ENCODE measurements at regions of chr16 and their contacts with region 1.

Region 1: GRCh38 chr16:73878611-73879010 is 418.0 kb upstream of the PSMD7 start:
- DNase-seq: no peak
- H3K4me3 ChIP-seq: no peak overlapping the region
- H3K27ac ChIP-seq: no peak overlapping the region
- H3K4me1 ChIP-seq: peaks cover 0 to 8% (median 0%) of the 10 kb centered on the region in 3 donors
- H3K27me3 ChIP-seq: peaks cover 0 to 16% (median 0%) of the 10 kb centered on the region in 4 donors
- CTCF ChIP-seq: peak in 4 of 6 experiments; percentile 31 to 56 (median 42)
- POLR2A ChIP-seq: no peak

Region 2: DNA sequence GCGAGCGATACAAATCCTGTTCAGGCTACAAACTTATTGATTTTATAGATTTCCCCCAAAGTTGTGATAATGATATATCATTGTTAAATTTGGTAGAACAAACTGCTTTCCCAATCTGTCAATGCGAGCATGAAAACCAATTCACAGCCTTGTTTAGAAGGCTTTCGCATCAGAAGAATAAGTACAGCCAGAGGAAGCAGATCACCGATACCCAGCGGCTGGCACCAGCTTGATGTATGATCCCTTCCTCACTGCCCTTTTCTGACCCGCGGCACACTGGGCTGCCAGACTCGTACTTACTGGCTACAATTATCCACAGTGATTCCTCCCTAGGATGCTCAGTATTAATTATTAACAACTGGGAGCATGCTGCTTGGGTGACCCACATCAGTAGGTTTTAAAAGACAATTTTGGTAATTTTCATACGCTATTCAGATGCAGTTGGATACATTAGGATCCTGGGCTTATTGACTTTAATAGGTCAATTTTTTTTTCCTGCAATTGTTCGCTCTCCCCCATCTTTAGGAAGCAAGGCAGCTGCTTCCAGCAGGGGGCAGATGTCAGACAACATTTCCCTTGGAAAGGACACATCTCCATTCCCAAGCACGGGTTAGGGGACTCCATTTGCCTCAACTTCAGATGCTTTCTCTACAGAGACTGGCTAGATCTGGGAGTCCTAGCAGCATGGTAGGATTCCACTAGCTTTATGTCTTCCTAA is 164.7 kb before region 1 on chr16:
- intact Hi-C with region 1: loop called (anchors 10 kb)
- DNase-seq: no peak
- H3K4me3 ChIP-seq: no peak overlapping the region
- H3K27ac ChIP-seq: no peak overlapping the region
- H3K4me1 ChIP-seq: peaks cover 0 to 6% (median 0%) of the 10 kb centered on the region in 3 donors
- H3K27me3 ChIP-seq: no peaks in the 10 kb centered on the region
- CTCF ChIP-seq: peak in 5 of 6 experiments; percentile 7 to 55 (median 39)
- POLR2A ChIP-seq: no peak